Vagina (tissue), 2 donors: ENCODE measurements at regions of chr19 and their contacts with region 1.

Region 1: GRCh38 chr19:56477429-56478338 is 539 bp upstream of the ZNF667 start:
- DNase-seq: peak in 1 of 2 donors; percentile 89
- H3K4me3 ChIP-seq: peak overlapping the region; percentile 54 to 75
- H3K27ac ChIP-seq: peak overlapping the region; percentile 68
- H3K4me1 ChIP-seq: peaks cover 20% of the 10 kb centered on the region
- H3K27me3 ChIP-seq: no peaks in the 10 kb centered on the region
- CTCF ChIP-seq: no peak
- POLR2A ChIP-seq: no peak

Region 2: DNA sequence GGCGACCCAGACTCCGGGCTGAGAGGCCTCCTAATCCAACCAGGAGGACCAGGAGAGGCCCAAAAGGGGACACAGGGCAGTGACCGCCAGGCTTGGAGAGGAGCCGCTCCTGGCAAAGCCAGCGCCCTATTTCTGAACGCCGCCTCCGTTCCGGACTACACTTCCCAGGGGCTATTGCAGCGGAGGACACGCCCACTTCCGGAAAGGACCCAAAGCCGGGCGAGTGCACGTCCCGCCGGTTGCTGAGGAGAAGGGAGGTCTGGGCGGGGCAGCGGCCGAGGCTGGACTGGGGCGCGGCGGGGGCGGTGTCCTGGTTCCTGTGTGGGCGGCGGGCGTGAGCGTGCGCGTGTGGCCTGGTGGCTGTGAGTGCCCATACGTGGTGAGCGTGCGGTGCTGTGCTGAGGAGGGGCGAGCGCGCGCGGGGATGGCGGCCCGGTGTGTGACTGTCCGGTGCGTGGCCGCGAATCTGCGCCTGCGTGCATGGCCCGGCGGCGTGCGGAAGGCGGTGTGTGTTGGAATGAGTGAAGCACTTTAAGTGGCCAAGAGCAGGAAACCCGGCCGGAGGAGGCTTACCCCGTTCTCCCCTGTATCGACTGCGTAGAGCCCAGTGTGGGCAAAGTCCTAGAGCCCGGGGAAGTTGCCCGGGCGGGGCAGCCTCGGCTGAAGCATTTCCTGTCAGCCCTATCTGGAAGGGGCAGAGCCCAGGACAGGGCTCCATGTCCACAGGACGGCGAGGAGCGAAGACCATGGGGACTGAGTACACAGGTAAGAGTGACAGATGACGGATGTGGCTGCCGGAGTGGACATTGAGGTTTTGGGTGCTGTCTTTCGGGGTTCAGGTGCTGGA is 89.8 kb after region 1 on chr19 and contains the start of gene ZNF470:
- intact Hi-C with region 1: loop called (anchors 10 kb)
- DNase-seq: peak in 1 of 2 donors; percentile 92
- H3K4me3 ChIP-seq: peak within 1 kb of the TSS; percentile 77 to 90
- H3K27ac ChIP-seq: peak within 1 kb of the TSS; percentile 61
- H3K4me1 ChIP-seq: peaks cover 17% of the 10 kb centered on the region
- H3K27me3 ChIP-seq: no peaks in the 10 kb centered on the region
- CTCF ChIP-seq: no peak
- POLR2A ChIP-seq: no peak
- total RNA-seq, gene ZNF470: 3.2 TPM